ENCODE measurements at regions of chr1 and their contacts with region 1.

Region 1: DNA sequence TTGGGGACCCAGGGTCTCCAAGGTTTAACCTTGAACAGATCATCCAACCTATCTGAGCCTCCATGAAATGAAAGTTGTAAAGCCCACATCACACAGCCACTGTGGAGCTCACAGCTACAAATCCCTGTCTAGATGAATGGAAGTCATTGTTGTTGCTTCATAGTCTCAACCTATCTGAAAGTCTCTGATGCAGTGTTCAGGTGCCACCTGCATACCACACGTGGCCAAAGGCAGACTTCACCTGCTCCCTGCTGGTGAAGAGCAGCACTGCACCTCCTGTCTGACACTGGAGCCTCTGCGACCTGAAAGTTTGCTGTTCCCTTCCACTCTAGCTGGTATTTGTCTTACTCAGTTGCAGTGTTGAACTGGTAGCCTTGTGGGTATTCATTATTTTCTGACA is 18.3 kb downstream of the LORICRIN start:
- DNase-seq: peak; percentile 64
- H3K4me3 Mint-ChIP-seq: no peak overlapping the region
- H3K27ac Mint-ChIP-seq: no peak overlapping the region
- H3K4me1 Mint-ChIP-seq: no peaks in the 10 kb centered on the region
- H3K27me3 Mint-ChIP-seq: peaks cover 31% of the 10 kb centered on the region
- CTCF ChIP-seq: peak; percentile 87

Region 2: DNA sequence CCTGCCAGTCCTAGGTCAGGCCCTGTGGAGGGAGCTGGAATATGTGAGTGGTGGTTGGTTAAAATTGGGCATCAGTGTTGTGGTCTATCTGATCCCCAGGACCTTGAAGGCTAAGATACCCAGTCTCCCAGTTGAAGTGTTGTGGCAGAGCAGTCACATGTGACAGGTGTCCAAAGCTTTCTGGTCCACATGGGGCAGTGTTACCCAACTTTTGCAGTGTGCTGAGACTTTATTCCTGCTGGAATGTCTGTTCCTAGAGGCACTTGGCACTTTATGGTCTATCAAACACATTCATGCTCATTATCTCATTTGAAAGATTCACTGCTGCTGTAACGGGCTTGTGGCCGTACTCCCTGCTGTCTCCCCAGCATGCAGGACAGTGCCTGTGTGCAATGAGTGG is 39.3 kb before region 1 on chr1:
- CTCF ChIA-PET with region 1: interaction called, 5 read pairs
- POLR2A ChIA-PET with region 1: no interaction called
- intact Hi-C with region 1: loop called (anchors 5 kb)
- DNase-seq: peak; percentile 47
- H3K4me3 Mint-ChIP-seq: no peak overlapping the region
- H3K27ac Mint-ChIP-seq: no peak overlapping the region
- H3K4me1 Mint-ChIP-seq: no peaks in the 10 kb centered on the region
- H3K27me3 Mint-ChIP-seq: peaks cover 62% of the 10 kb centered on the region
- CTCF ChIP-seq: peak; percentile 25

Region 3: GRCh38 chr1:153312570-153313193 is 34.9 kb after region 1 on chr1 and contains the start of gene PGLYRP3:
- CTCF ChIA-PET with region 1: no interaction called
- POLR2A ChIA-PET with region 1: no interaction called
- intact Hi-C with region 1: no loop called
- DNase-seq: peak; percentile 21
- H3K4me3 Mint-ChIP-seq: no peak within 1 kb of the TSS
- H3K27ac Mint-ChIP-seq: no peak within 1 kb of the TSS
- H3K4me1 Mint-ChIP-seq: no peaks in the 10 kb centered on the region
- H3K27me3 Mint-ChIP-seq: peaks cover 50% of the 10 kb centered on the region
- CTCF ChIP-seq: no peak
- total RNA-seq, gene PGLYRP3: not detected in 2 replicates

Measured in MCF 10A (cell line).